Left colon (tissue), 2 donors: ENCODE measurements at regions of chr3 and their contacts with region 1.

Region 1: GRCh38 chr3:108219336-108219735 is 2.9 kb downstream of the IFT57 start:
- DNase-seq: no peak
- ATAC-seq: no peak

Region 2: GRCh38 chr3:108100906-108101660 is 118.3 kb before region 1 on chr3:
- intact Hi-C with region 1: loop called in 1 of 2 experiments (anchors 10 kb)
- DNase-seq: no peak
- ATAC-seq: no peak

Region 3: DNA sequence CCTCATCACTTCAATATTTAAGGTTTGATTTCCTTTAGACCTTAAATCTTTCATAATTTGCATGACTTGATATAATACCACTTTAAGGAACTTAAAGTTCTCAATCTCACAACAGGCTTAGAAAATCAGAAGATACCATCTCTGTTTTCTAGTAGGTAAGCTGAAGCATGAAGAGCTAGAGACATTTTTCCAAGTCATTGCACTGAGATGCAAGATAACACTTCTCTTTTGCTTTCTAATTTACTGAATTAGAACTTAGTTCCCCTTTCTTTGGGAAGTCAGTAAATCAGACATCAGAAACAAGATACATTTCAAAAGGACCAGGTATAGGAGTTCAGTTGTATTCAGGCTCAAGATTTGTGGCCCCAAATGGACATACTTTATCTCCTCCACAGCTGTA is 449.9 kb after region 1 on chr3:
- intact Hi-C with region 1: no loop called
- DNase-seq: no peak
- ATAC-seq: no peak

Region 4: GRCh38 chr3:109125902-109126301 is 906.6 kb after region 1 on chr3:
- intact Hi-C with region 1: no loop called
- DNase-seq: no peak
- ATAC-seq: peak; percentile 100